Transverse colon (tissue), 4 donors: ENCODE measurements at regions of chr12 and their contacts with region 1.

Region 1: DNA sequence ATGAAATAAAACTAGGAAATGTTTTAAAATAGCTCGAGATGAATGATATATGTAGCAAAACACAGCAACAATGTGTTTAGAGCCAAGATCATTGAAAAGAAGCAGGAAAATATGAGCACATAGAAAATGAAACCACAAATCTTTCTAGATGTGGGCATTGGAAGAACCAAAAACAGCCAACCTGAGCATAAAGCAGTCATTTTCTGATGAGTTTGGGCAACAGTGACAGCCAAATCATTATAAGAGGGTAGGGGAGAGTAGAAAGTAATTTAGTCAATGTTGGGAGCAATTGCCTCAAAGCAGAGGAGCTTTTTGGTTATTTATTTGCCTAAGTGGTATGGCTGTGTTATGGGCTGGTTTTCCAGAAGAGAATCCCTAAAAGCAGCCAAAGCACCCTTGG is 8.8 kb upstream of the BICDL1 start:
- DNase-seq: no peak
- H3K4me3 ChIP-seq: no peak overlapping the region
- H3K27ac ChIP-seq: no peak overlapping the region
- H3K4me1 ChIP-seq: no peaks in the 10 kb centered on the region
- H3K27me3 ChIP-seq: peaks cover 40% of the 10 kb centered on the region
- CTCF ChIP-seq: no peak
- EP300 ChIP-seq: no peak
- POLR2A ChIP-seq: no peak

Region 2: DNA sequence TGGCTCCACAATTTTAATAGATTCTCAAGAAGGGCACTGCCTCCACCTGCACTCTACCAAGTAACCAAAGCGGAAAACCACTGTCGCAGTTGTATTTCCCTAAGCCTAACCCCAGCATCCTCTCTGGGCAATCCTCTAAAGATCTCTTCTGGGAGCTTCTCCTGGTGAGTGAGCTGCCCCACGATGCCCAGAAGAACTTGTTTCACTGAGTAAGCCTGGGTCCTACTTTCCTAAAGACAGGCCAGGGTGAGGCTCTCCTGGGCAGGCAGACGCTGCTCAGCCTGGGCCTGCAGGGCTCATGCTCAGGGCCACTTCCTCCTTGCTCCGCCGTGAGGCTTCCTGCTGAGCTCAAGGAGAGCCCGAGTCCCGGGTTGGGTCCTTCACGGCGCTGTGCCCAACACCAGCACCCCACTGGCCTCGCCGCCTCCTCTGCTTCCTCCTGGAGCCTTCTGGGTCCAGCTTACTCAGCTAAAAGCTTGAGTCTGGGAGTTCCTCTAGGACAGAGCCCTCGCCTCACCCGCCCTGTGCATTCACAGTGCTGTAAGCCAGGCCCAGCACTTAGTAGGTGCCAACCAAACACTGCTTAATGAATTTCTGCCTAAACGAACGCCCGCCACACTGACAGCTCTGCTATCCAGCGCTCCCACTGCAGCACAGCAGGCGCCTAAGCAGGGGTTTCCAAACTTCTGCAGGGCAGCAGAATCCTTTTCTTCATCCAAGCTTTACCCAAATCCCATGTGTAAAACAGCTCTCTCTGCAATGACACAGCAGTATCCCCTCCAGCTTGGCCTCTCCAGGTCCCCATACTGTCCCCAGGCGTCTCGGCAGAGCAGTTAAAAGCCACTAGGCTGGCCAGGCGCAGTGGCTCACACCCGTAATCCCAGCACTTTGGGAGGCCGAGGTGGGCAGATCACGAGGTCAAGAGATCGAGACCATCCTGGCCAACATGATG is 130.6 kb after region 1 on chr12:
- in situ Hi-C with region 1: no loop called
- intact Hi-C with region 1: no loop called
- DNase-seq: peak; percentile 58
- H3K4me3 ChIP-seq: no peak overlapping the region
- H3K27ac ChIP-seq: peak overlapping the region; percentile 9 to 39 (median 26)
- H3K4me1 ChIP-seq: peaks cover 14 to 50% (median 21%) of the 10 kb centered on the region in 4 donors
- H3K27me3 ChIP-seq: no peaks in the 10 kb centered on the region
- CTCF ChIP-seq: no peak
- EP300 ChIP-seq: no peak
- POLR2A ChIP-seq: no peak

Region 3: DNA sequence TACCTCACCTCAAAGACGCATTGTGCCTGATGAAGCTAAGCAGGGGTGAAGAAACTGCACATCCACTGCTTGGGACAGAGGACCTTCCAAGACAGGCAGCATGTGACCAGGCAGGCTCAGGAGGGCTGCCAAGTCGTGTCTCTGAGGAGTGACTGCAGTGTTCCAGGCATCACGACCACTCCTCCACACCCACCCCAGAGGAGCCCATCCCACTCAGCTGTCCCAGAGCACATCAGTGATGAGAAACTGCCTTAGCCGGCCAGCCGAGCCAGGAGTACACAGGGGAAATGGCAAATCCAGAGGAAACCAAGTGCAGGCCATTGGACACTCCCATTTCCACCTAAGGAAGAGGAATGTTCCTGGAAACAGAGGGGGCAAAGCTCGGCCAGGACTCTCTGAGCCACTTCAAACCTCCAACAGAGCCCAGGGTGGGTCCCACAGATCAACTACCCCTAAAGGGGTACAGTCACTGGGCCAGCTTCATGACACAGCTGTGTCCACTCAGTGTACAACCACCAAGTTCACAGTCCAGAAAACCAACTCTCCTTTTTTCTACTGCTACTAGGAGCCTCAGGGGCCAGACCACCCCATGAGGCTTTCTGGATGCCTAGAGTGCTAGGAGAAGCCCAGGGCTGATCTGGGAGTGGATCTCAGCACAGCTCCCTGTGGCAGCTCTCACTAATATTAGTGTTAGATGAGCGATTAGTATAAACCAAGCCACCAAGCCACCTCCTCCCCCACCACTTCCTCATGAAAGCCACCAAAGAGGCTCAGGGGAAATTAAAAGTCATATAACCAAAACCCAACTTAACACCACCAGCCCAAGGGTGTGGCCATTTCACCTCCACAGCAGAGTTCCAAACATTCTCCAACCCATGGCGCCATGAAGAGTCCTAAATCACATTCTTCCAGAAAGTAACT is 269.9 kb after region 1 on chr12:
- in situ Hi-C with region 1: no loop called
- intact Hi-C with region 1: loop called (anchors 5 kb)
- DNase-seq: no peak
- H3K4me3 ChIP-seq: no peak overlapping the region
- H3K27ac ChIP-seq: peak overlapping the region; percentile 47 to 87 (median 55)
- H3K4me1 ChIP-seq: peaks cover 12 to 77% (median 37%) of the 10 kb centered on the region in 4 donors
- H3K27me3 ChIP-seq: no peaks in the 10 kb centered on the region
- CTCF ChIP-seq: no peak
- EP300 ChIP-seq: no peak
- POLR2A ChIP-seq: no peak